A673 (cell line): ENCODE measurements at regions of chr6 and their contacts with region 1.

Region 1: GRCh38 chr6:41683510-41684310 is 45.4 kb downstream of the MDFI start:
- DNase-seq: peak; percentile 89
- H3K4me3 ChIP-seq: peak overlapping the region; percentile 42
- H3K27ac ChIP-seq: peak overlapping the region; percentile 66
- H3K4me1 ChIP-seq: peaks cover 19% of the 10 kb centered on the region
- H3K27me3 ChIP-seq: no peaks in the 10 kb centered on the region
- CTCF ChIP-seq: peak; percentile 95

Region 2: GRCh38 chr6:41306187-41306854 is 377.4 kb before region 1 on chr6:
- CTCF ChIA-PET with region 1: no interaction called
- POLR2A ChIA-PET with region 1: no interaction called
- intact Hi-C with region 1: loop called (anchors 2 kb)
- DNase-seq: peak; percentile 57
- H3K4me3 ChIP-seq: no peak overlapping the region
- H3K27ac ChIP-seq: no peak overlapping the region
- H3K4me1 ChIP-seq: no peaks in the 10 kb centered on the region
- H3K27me3 ChIP-seq: peaks cover 12% of the 10 kb centered on the region
- CTCF ChIP-seq: peak; percentile 69

Region 3: DNA sequence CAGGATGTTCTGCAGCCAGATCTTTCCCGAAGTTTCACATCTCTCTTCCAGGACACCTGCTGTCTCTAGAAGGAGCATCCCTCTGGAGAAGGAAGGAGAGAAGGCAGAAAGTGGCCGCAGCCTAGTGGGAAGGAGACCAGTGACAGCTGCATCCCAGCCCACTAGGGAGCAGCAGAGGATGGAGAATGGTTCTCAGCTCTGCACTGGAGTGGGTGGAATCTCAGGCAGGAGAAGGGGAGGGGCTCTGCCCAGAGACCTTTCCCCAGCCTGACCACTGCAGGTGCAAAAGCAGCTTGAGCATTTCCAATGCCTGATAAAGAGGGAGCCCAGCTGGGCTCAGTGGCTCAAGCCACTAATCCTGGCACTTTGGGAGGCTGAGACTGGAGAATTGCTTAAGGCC is 316.0 kb before region 1 on chr6:
- CTCF ChIA-PET with region 1: interaction called, 23 read pairs
- POLR2A ChIA-PET with region 1: interaction called, 4 read pairs
- intact Hi-C with region 1: loop called (anchors 1 kb)
- DNase-seq: peak; percentile 77
- H3K4me3 ChIP-seq: no peak overlapping the region
- H3K27ac ChIP-seq: no peak overlapping the region
- H3K4me1 ChIP-seq: peaks cover 11% of the 10 kb centered on the region
- H3K27me3 ChIP-seq: no peaks in the 10 kb centered on the region
- CTCF ChIP-seq: peak; percentile 82

Region 4: DNA sequence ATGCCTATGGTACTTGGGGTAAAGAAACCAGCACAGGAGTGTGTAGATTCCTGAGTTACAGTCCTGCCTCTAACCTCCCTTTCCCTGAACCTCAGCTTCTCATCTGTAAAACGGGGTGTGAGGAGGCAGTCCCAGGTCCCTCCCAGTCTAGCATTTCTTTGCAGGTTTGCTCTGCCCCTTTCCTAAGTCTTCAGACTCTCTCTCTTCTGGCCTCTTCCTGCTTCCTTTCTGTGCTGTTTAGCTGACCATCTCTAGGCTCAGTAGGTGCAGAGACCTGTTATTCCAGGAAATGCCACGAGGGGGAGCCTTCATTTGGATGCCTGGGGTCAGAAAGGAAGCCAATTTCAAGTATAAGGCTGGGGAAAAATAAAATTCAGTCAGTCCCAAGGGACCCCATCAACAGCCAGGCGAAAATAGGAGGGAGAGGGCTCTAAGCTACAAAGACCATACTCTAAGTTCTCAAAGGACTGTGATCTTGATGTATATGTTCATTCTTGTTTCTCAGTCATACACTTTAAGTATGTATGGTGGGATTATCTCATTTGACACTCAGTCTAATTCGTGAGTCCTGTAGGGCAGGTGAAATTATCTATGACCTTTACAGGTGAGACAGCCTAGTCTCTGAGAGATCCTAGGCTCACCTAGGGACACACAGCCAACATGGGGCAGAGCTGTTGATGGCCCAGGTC is 259.2 kb before region 1 on chr6:
- CTCF ChIA-PET with region 1: interaction called, 4 read pairs
- POLR2A ChIA-PET with region 1: no interaction called
- intact Hi-C with region 1: loop called (anchors 1 kb)
- DNase-seq: peak; percentile 89
- H3K4me3 ChIP-seq: no peak overlapping the region
- H3K27ac ChIP-seq: no peak overlapping the region
- H3K4me1 ChIP-seq: peaks cover 19% of the 10 kb centered on the region
- H3K27me3 ChIP-seq: peaks cover 6% of the 10 kb centered on the region
- CTCF ChIP-seq: peak; percentile 93

Region 5: GRCh38 chr6:41494212-41495110 is 189.2 kb before region 1 on chr6:
- CTCF ChIA-PET with region 1: interaction called, 13 read pairs
- POLR2A ChIA-PET with region 1: no interaction called
- intact Hi-C with region 1: no loop called
- DNase-seq: no peak
- H3K4me3 ChIP-seq: no peak overlapping the region
- H3K27ac ChIP-seq: no peak overlapping the region
- H3K4me1 ChIP-seq: peaks cover 15% of the 10 kb centered on the region
- H3K27me3 ChIP-seq: no peaks in the 10 kb centered on the region
- CTCF ChIP-seq: no peak

Region 6: GRCh38 chr6:41602864-41603608 is 80.7 kb before region 1 on chr6:
- CTCF ChIA-PET with region 1: interaction called, 26 read pairs
- POLR2A ChIA-PET with region 1: interaction called, 17 read pairs
- intact Hi-C with region 1: loop called (anchors 1 kb)
- DNase-seq: peak; percentile 93
- H3K4me3 ChIP-seq: peak overlapping the region; percentile 10
- H3K27ac ChIP-seq: peak overlapping the region; percentile 26
- H3K4me1 ChIP-seq: peaks cover 11% of the 10 kb centered on the region
- H3K27me3 ChIP-seq: no peaks in the 10 kb centered on the region
- CTCF ChIP-seq: peak; percentile 98

Region 7: GRCh38 chr6:41639612-41640371 is 43.9 kb before region 1 on chr6:
- CTCF ChIA-PET with region 1: no interaction called
- POLR2A ChIA-PET with region 1: no interaction called
- intact Hi-C with region 1: loop called (anchors 5 kb)
- DNase-seq: peak; percentile 88
- H3K4me3 ChIP-seq: peak overlapping the region; percentile 97
- H3K27ac ChIP-seq: peak overlapping the region; percentile 99
- H3K4me1 ChIP-seq: peaks cover 83% of the 10 kb centered on the region
- H3K27me3 ChIP-seq: no peaks in the 10 kb centered on the region
- CTCF ChIP-seq: no peak

Region 8: GRCh38 chr6:41836660-41837052 is 152.9 kb after region 1 on chr6:
- CTCF ChIA-PET with region 1: no interaction called
- POLR2A ChIA-PET with region 1: no interaction called
- intact Hi-C with region 1: no loop called
- DNase-seq: no peak
- H3K4me3 ChIP-seq: no peak overlapping the region
- H3K27ac ChIP-seq: no peak overlapping the region
- H3K4me1 ChIP-seq: no peaks in the 10 kb centered on the region
- H3K27me3 ChIP-seq: no peaks in the 10 kb centered on the region
- CTCF ChIP-seq: no peak